ENCODE measurements at regions of chr11 and their contacts with region 1.

Region 1: GRCh38 chr11:10307442-10308207 is 2.8 kb downstream of the ADM start:
- DNase-seq: peak; percentile 94
- ATAC-seq: peak; percentile 8
- H3K4me3 ChIP-seq: peak overlapping the region; percentile 65
- H3K27ac ChIP-seq: peak overlapping the region; percentile 83
- H3K4me1 ChIP-seq: peaks cover 7% of the 10 kb centered on the region
- H3K27me3 ChIP-seq: no peaks in the 10 kb centered on the region
- CTCF ChIP-seq: peak; percentile 95
- POLR2A ChIP-seq: peak; percentile 51; the same call in 1 of the 2 replicates
- RAD21 ChIP-seq: peak; percentile 87

Region 2: DNA sequence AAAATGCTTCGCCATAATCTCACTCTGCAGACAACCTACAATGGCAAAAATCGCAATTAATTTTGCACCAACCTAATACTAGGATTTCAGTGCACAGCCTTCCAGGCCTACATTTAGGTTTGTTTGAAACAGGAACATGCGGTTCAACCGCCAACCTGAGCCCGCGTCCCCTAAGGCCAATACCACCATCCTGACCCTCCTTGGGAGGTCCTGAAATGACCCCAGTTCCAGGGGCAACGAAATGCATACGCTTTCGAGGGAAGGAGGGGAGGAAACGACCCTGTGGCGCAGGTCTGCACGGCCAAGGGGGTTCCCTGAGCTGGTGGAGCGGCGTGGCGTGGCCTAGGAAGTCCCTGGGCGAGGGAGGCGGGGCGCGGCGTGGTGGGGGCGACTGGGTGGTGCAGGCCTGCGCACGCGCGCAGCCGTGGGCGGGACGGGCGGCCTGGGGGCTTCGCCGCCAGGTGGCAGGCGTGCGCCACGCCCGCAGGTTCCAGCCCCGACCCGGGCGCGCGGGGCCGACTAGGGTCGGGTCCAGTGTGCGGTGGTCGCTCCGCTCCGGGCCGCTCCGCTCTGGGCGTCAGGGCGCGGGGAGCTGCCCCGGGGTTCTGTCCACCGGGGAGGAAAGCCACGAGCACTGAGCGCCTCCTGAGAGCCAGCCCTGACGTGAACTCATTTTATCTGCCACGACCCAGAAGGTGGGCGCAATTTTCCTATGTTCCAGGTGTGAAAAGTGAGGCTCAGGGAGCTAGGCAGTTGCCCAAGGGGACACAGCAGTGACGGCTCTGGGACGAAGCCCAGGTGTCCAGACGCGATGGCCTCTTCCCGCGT is 549.6 kb before region 1 on chr11:
- CTCF ChIA-PET with region 1: interaction called, 5 read pairs
- POLR2A ChIA-PET with region 1: interaction called, 18 read pairs
- dilution Hi-C with region 1: no loop called
- in situ Hi-C with region 1: no loop called
- intact Hi-C with region 1: loop called (anchors 2 kb)
- DNase-seq: peak; percentile 72
- ATAC-seq: peak; percentile 43
- H3K4me3 ChIP-seq: peak overlapping the region; percentile 32
- H3K27ac ChIP-seq: peak overlapping the region; percentile 96
- H3K4me1 ChIP-seq: peaks cover 48% of the 10 kb centered on the region
- H3K27me3 ChIP-seq: no peaks in the 10 kb centered on the region
- CTCF ChIP-seq: peak; percentile 86
- POLR2A ChIP-seq: no peak
- RAD21 ChIP-seq: peak; percentile 86

Region 3: DNA sequence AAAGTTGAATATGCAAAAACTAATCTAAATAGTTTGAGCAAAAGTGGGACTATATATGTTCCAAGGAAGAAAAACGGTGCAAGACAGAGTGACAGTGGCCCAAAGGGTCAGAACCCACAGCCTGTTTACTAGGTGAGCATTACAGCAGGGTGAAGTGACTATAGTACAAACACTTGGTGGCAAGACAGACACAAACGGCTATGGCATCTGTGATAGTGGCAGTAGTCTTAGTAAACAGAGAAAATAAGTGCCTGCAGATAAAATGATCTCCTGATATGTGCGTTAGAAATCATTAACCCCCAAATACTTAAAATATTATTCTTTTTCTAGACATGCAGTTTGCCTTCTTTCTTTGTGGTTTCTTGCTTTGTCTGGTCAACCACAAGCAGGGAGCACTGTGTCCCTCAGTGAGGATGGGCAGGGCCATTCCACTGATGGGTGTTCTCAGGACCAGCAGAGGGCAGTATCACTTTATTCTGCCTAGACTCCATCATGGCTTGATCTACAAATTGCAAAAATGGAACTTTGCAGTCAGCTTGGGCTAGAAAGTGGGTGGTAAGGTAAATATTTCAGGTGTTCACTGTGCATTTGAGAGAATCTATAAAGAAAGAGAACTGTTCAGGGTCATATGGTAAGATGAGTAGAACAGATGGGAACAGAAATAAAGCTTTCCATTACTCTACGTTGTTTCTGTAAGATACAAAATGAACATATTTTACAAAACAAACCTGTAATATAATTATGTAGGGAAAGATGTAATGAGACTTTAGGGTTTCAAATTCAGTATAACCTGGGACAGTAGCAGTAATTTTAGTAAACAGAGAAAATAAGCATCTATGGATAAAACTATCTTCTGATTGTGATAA is 445.5 kb before region 1 on chr11:
- CTCF ChIA-PET with region 1: interaction called, 5 read pairs
- POLR2A ChIA-PET with region 1: interaction called, 3 read pairs
- dilution Hi-C with region 1: no loop called
- in situ Hi-C with region 1: no loop called
- intact Hi-C with region 1: loop called (anchors 5 kb)
- DNase-seq: peak; percentile 75
- ATAC-seq: peak; percentile 74
- H3K4me3 ChIP-seq: no peak overlapping the region
- H3K27ac ChIP-seq: peak overlapping the region; percentile 34; the same call in 1 of the 2 replicates
- H3K4me1 ChIP-seq: peaks cover 9% of the 10 kb centered on the region
- H3K27me3 ChIP-seq: no peaks in the 10 kb centered on the region
- CTCF ChIP-seq: peak; percentile 75
- POLR2A ChIP-seq: no peak
- RAD21 ChIP-seq: peak; percentile 77

Region 4: GRCh38 chr11:9972989-9973388 is 334.6 kb before region 1 on chr11:
- CTCF ChIA-PET with region 1: no interaction called
- POLR2A ChIA-PET with region 1: no interaction called
- dilution Hi-C with region 1: no loop called
- in situ Hi-C with region 1: loop called (anchors 10 kb)
- intact Hi-C with region 1: loop called (anchors 1 kb)
- DNase-seq: peak; percentile 70
- ATAC-seq: peak; percentile 70
- H3K4me3 ChIP-seq: no peak overlapping the region
- H3K27ac ChIP-seq: no peak overlapping the region
- H3K4me1 ChIP-seq: peaks cover 12% of the 10 kb centered on the region; the same call in 1 of the 2 replicates
- H3K27me3 ChIP-seq: no peaks in the 10 kb centered on the region
- CTCF ChIP-seq: peak; percentile 75
- POLR2A ChIP-seq: no peak
- RAD21 ChIP-seq: peak; percentile 85

Region 5: DNA sequence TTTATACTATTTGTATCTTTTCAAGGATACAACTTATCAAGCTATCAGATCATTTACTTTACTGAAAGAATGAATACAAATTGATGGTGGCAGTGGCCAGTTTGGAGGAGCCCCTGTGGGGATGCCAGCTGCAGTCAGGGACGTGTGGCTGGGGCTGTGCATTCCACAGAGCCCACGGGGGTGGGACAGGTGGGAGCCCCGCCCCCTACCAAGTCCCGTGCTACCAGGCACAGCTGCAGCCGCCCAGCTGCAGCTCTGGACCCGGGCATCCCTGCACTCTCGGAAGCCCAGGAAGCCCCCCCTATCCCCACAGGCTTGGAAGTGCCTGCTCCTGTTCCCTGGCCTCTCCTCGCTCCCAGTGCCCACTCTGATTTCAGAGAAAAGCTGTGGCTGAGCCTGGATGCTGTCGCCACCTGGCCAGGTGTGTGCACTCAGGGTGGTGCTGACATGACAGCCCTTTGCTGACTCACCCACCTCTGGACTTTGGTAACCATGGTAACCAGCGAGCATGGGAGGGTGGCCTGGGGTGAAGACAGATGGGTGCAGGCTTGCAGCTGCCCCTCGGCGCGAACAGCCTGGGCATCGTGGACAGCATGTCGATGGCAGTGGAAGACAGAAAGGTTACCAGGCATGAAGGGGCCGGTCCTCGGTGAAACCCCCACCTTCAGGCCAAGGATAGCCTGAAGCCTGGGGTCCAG is 151.7 kb before region 1 on chr11:
- CTCF ChIA-PET with region 1: no interaction called
- POLR2A ChIA-PET with region 1: no interaction called
- dilution Hi-C with region 1: no loop called
- in situ Hi-C with region 1: no loop called
- intact Hi-C with region 1: no loop called
- DNase-seq: no peak
- ATAC-seq: no peak
- H3K4me3 ChIP-seq: no peak overlapping the region
- H3K27ac ChIP-seq: no peak overlapping the region
- H3K4me1 ChIP-seq: no peaks in the 10 kb centered on the region
- H3K27me3 ChIP-seq: no peaks in the 10 kb centered on the region
- CTCF ChIP-seq: no peak
- POLR2A ChIP-seq: no peak
- RAD21 ChIP-seq: no peak

Region 6: GRCh38 chr11:10208131-10208575 is 99.5 kb before region 1 on chr11:
- CTCF ChIA-PET with region 1: interaction called, 4 read pairs
- POLR2A ChIA-PET with region 1: interaction called, 6 read pairs
- dilution Hi-C with region 1: no loop called
- in situ Hi-C with region 1: loop called (anchors 5 kb)
- intact Hi-C with region 1: loop called (anchors 1 kb)
- DNase-seq: peak; percentile 64
- ATAC-seq: peak; percentile 77
- H3K4me3 ChIP-seq: peak overlapping the region; percentile 7; the same call in 1 of the 2 replicates
- H3K27ac ChIP-seq: peak overlapping the region; percentile 67
- H3K4me1 ChIP-seq: peaks cover 7% of the 10 kb centered on the region
- H3K27me3 ChIP-seq: no peaks in the 10 kb centered on the region
- CTCF ChIP-seq: peak; percentile 61
- POLR2A ChIP-seq: no peak
- RAD21 ChIP-seq: peak; percentile 64

Region 7: DNA sequence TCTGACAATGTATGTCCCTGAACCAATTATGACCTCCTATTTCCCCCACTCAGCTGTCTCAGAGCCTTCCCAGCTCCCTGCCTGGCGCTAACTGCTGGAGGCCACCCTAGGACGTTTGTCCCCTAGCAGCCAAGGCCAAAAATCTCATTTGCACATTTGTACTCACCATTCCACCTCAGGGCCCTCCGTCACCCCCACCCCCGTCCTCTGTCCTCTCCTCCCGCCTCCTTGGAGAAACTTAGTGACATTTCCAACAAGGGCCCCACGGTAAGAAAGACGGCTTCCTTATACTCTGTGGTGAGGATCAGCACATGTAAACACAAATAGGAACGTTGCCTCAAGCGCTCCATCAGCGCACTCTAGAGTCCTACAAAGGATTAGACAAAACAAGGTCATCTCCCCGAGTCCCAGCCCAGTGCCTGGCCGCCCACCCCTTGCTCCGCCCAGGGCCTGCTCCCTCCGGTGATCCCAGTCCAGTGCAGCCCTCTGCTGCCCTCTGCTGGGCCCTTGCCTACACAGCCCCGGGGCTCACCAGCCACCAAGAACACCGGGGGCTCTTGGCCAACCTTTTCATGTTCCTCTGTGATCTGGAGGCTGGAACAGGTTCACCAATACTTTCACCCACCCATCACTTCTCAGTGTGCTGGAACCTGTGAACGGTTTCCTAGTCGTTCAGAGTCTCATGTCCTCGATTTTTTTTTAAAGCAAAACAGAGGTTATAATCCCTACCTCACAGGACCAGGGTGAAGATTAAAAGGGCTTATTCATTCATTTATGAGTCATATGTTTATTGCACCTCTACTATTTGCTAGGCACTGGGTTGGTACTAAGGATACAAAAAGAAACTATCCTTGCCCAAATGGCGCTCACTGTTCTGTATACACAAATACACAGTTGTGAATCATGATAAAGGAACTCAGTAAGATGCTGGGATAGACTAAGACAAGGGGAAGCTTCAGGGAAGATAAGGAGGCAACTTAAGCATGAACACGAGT is 428.2 kb after region 1 on chr11:
- CTCF ChIA-PET with region 1: no interaction called
- POLR2A ChIA-PET with region 1: no interaction called
- dilution Hi-C with region 1: no loop called
- in situ Hi-C with region 1: no loop called
- intact Hi-C with region 1: loop called (anchors 1 kb)
- DNase-seq: peak; percentile 96
- ATAC-seq: peak; percentile 97
- H3K4me3 ChIP-seq: peak overlapping the region; percentile 40; the same call in 1 of the 2 replicates
- H3K27ac ChIP-seq: peak overlapping the region; percentile 93
- H3K4me1 ChIP-seq: peaks cover 8% of the 10 kb centered on the region
- H3K27me3 ChIP-seq: no peaks in the 10 kb centered on the region
- CTCF ChIP-seq: peak; percentile 99
- POLR2A ChIP-seq: no peak; the same call in 1 of the 2 replicates
- RAD21 ChIP-seq: peak; percentile 99